PC-9 (cell line): ENCODE measurements at regions of chr6 and their contacts with region 1.

Region 1: DNA sequence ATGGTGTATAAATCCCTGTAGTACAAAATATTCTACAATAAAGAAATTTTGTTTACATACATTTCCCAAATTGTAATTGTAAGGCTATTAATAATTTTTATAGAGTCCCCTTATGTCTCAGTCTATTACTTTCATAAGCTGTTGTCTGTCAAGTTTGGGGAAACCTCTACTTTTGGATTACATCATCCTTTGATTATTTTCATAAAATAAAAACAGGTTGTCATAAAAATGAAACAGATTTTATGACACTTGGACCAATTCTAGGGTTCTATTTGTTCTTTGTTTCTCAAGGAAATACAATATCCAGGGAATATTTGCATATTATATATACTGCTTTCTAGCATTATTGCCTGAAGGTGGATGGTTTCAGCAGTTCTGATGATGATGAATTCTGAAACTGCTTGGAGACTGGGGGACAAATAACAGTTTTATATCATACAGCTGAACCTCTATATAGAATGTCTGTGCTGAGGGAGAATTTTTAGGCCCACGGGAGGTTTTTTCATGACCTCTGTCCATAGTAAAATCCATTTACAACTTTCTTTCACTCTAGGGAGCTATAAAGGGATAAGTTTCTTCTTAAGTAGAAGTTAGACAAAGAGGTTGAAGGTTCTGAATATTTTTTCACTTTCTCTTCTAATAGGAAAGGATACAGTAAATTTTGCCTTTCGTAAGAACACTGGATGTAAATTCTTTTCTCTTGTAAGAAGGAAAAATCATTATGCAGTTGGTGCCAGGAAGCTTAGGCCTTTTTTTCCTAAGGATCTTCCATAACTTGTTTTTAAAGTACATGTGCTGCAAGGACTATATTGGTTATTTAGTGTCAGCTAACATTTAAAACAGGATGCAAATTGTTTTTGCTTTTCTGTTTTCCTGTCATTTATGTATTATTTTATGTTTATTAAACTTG is 58.0 kb downstream of the CD2AP start:
- DNase-seq: no peak
- H3K4me3 ChIP-seq: no peak overlapping the region
- H3K27ac ChIP-seq: no peak overlapping the region
- H3K4me1 ChIP-seq: no peaks in the 10 kb centered on the region
- H3K27me3 ChIP-seq: no peaks in the 10 kb centered on the region
- CTCF ChIP-seq: no peak

Region 2: DNA sequence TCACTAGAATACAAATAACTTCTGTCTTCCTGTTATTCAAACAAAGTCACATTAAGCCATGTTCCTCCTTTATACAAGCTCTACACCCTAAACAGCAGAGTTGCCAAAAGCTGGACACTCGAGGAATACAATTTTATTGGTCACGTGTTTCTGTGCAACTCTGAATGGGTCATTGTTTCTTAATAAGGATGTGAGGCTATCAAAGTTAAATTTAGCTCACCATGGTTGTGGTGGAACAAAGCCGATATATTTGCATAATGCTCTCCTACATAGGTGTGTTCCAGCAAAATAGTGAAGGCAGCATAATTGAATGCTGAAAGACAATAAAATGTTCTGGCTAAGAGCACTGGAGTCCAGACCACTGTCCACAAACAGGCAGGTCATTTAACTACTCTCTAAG is 94.9 kb before region 1 on chr6:
- CTCF ChIA-PET with region 1: no interaction called
- POLR2A ChIA-PET with region 1: interaction called, 12 read pairs
- intact Hi-C with region 1: no loop called
- DNase-seq: no peak
- H3K4me3 ChIP-seq: no peak overlapping the region
- H3K27ac ChIP-seq: no peak overlapping the region
- H3K4me1 ChIP-seq: no peaks in the 10 kb centered on the region
- H3K27me3 ChIP-seq: no peaks in the 10 kb centered on the region
- CTCF ChIP-seq: no peak